ENCODE measurements at regions of chr4 and their contacts with region 1.

Region 1: DNA sequence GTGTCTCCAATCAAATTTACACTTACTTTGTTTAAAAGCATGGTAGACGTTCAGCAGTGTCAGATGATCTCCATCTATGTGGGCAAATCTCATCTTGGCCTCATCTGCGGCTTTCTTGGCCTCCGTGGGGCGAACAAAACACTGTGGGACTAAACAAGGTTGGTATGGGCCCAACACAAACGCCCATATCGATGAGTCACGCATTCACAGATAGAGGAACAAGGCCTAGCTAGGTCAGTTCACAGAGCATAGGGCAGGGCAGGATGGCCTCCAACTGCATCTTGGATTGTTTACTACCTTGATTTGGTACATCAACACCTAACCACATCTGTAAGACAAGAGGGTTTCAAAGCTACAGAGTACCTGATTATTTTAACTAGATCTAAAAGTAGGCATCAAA is 47.3 kb downstream of the DHX15 start:
- DNase-seq: no peak
- H3K4me3 Mint-ChIP-seq: no peak overlapping the region
- H3K27ac Mint-ChIP-seq: no peak overlapping the region
- H3K4me1 Mint-ChIP-seq: peaks cover 29% of the 10 kb centered on the region
- H3K27me3 Mint-ChIP-seq: no peaks in the 10 kb centered on the region

Region 2: DNA sequence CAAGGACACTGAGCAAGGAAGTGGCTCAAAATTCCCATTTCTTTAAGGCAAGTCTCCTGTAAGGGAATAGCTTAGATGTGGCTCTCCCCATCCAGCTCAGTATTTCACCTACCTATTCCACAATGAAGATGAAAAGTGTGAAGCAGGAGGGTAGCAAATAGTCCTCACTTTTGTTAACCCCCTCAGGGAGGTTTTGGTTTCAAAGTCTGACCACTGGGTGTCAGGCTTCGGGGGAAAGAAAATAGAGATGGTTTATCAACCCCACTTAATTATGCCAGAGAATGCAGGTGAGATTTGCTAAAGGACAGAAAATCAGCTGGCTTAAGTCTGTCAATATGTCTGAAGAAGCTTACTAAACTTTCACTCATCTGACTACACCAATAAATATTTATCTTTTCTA is 22.2 kb before region 1 on chr4:
- intact Hi-C with region 1: no loop called
- DNase-seq: no peak
- H3K4me3 Mint-ChIP-seq: no peak overlapping the region
- H3K27ac Mint-ChIP-seq: no peak overlapping the region
- H3K4me1 Mint-ChIP-seq: peaks cover 4% of the 10 kb centered on the region
- H3K27me3 Mint-ChIP-seq: no peaks in the 10 kb centered on the region

Region 3: DNA sequence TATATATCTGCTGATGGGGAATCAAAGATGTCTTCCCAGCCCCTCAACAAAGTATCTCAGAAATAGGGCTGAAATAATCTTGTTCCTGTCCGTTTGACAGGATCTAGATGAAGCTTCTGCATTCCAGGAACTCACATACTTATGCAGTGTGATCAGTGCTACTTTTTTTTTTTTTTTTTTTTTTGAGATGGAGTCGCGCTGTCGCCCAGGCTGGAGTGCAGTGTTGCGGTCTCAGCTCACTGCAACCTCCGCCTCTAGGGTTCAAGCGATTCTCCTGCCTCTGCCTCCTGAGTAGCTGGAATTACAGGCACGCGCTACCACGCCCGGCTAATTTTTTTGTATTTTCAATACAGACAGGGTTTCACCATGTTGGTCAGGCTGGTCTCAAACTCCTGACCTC is 11.0 kb after region 1 on chr4:
- intact Hi-C with region 1: loop called (anchors 2 kb)
- DNase-seq: no peak
- H3K4me3 Mint-ChIP-seq: no peak overlapping the region
- H3K27ac Mint-ChIP-seq: no peak overlapping the region
- H3K4me1 Mint-ChIP-seq: peaks cover 43% of the 10 kb centered on the region
- H3K27me3 Mint-ChIP-seq: no peaks in the 10 kb centered on the region